Activated CD8-positive, alpha-beta T cell treated with anti-CD3 and anti-CD28 coated beads, Interleukin-2, amount 10 ng/mL, durations not matched to agents 7 days and 5 days (primary cell): ENCODE measurements at regions of chr7 and their contacts with region 1.

Region 1: GRCh38 chr7:116984917-116985316 is 31.6 kb downstream of the ST7 start:
- DNase-seq: no peak
- ATAC-seq: peak; percentile 55
- H3K4me3 Mint-ChIP-seq: no peak overlapping the region
- H3K27ac Mint-ChIP-seq: no peak overlapping the region
- H3K4me1 Mint-ChIP-seq: no peaks in the 10 kb centered on the region
- H3K27me3 Mint-ChIP-seq: no peaks in the 10 kb centered on the region

Region 2: DNA sequence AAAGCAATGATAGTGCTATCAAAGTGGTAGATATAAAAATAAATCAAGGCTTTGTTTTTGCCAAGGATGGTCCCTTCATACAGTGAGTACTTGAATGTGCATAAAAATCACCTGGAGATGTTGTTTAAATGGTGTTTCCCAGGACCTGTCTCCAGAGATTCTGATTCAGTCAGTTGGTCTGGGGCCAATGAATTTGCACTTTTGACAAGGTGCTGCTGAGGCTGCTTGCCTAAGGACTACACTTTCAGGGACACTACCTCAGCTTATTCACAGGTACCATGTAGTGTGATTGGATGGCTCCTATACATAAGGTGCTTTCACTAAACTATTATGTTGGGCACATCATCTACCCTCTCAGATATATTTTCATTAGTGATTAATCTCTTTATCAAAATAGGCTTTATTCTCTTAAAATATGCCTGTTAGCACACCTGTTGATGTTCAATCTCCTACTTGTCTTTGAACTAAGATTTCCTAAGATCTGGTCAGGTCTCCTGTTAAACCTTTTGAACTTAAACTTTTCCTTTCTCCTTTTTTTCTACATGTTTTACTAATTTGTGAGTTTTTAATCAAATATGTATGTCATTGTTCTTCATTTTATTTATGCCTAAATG is 98.3 kb before region 1 on chr7:
- CTCF ChIA-PET with region 1: no interaction called
- POLR2A ChIA-PET with region 1: no interaction called
- DNase-seq: no peak
- ATAC-seq: no peak
- H3K4me3 Mint-ChIP-seq: no peak overlapping the region
- H3K27ac Mint-ChIP-seq: no peak overlapping the region
- H3K4me1 Mint-ChIP-seq: peaks cover 3% of the 10 kb centered on the region
- H3K27me3 Mint-ChIP-seq: no peaks in the 10 kb centered on the region

Region 3: GRCh38 chr7:116929914-116930913 is 54.7 kb before region 1 on chr7:
- CTCF ChIA-PET with region 1: interaction called, 18 read pairs
- POLR2A ChIA-PET with region 1: no interaction called
- DNase-seq: peak; percentile 81
- ATAC-seq: peak; percentile 91
- H3K4me3 Mint-ChIP-seq: no peak overlapping the region
- H3K27ac Mint-ChIP-seq: no peak overlapping the region
- H3K4me1 Mint-ChIP-seq: peaks cover 7% of the 10 kb centered on the region
- H3K27me3 Mint-ChIP-seq: peaks cover 24% of the 10 kb centered on the region

Region 4: GRCh38 chr7:117014673-117015133 is 29.8 kb after region 1 on chr7:
- CTCF ChIA-PET with region 1: interaction called, 158 read pairs
- POLR2A ChIA-PET with region 1: no interaction called
- DNase-seq: peak; percentile 30
- ATAC-seq: peak; percentile 50
- H3K4me3 Mint-ChIP-seq: no peak overlapping the region
- H3K27ac Mint-ChIP-seq: no peak overlapping the region
- H3K4me1 Mint-ChIP-seq: peaks cover 49% of the 10 kb centered on the region
- H3K27me3 Mint-ChIP-seq: peaks cover 2% of the 10 kb centered on the region

Region 5: DNA sequence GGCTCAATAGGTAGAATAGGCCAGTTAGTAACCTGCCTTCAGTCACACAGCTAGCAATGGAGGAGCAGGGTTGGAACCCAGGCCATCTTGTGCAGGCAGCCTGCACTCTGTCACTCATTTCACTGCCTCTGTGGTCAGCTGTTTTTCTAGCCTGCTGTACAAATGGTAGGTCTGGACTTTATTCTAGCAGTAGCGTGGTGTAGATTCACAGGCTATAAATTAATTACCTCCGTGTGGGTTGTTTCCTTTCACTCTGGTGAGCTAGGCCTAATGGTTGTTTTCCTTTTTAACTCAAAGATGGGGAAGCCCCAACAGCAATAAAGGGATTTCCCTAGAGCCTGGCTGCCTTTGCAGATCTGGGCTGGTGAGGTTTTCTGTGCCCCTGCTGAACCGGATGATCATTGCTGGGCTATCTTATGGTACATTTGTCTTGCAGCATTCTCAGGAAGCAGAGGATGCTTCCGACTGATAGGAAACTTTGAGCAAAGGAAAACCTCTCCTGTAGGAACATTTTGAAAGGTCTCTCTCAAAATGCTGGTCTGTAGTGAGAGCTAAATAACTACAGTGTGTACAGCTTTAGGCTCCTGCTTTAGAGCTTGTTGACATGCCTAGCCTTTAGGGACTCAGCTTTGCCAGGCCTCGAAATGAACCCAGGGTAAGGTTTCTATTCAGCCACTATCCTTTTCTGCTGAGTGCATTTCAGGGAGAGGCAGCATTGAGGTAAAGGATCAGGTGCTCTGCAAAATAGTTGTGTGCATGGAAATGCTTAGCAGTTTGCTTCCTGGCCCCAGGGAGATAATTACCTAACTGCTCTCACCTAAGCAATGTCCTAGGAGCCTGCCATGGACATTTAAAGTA is 125.8 kb after region 1 on chr7:
- CTCF ChIA-PET with region 1: interaction called, 170 read pairs
- POLR2A ChIA-PET with region 1: no interaction called
- DNase-seq: peak; percentile 54
- ATAC-seq: peak; percentile 93
- H3K4me3 Mint-ChIP-seq: peak overlapping the region; percentile 16
- H3K27ac Mint-ChIP-seq: peak overlapping the region; percentile 36
- H3K4me1 Mint-ChIP-seq: peaks cover 14% of the 10 kb centered on the region
- H3K27me3 Mint-ChIP-seq: peaks cover 5% of the 10 kb centered on the region

Region 6: DNA sequence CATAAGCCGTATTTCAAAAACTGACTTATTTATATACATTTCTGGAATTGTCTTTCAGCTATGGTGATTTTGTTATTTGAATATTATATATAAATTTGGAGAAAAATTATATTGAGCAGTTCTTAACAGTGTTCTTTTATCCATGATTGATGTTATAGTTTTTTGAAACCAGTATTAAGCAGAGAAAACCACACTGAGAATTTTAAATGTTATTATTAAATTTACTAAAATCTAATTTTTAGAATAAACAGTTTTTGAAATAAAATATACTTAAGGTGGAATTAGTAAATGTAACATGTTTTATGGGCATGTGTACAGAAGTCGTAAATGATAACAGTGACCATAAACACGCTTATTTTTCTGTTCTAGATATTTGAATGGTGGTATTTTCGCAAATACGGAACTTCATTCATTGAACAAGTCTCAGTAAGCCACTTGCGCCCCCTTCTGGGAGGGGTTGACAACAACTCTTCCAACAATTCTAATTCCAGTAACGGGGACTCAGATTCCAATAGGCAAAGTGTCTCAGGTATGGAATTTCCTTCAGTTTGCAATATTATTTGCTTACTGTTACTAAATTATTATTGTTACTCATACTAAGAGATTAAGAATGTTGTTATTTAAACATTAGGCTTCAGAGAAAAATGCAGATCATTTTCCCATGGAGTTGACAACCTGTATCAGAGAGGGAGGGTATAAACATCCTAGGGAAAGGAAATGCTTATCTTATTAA is 134.4 kb after region 1 on chr7:
- CTCF ChIA-PET with region 1: interaction called, 170 read pairs
- POLR2A ChIA-PET with region 1: no interaction called
- DNase-seq: peak; percentile 83
- ATAC-seq: peak; percentile 53
- H3K4me3 Mint-ChIP-seq: no peak overlapping the region
- H3K27ac Mint-ChIP-seq: no peak overlapping the region
- H3K4me1 Mint-ChIP-seq: no peaks in the 10 kb centered on the region
- H3K27me3 Mint-ChIP-seq: no peaks in the 10 kb centered on the region